Mammary epithelial cell (primary cell): ENCODE measurements at regions of chr20 and their contacts with region 1.

Region 1: GRCh38 chr20:32902456-32903420 is 44.0 kb downstream of the EFCAB8 start:
- DNase-seq: peak; percentile 36
- H3K4me3 ChIP-seq: no peak overlapping the region
- H3K27ac ChIP-seq: no peak overlapping the region
- H3K4me1 ChIP-seq: no peaks in the 10 kb centered on the region
- H3K27me3 ChIP-seq: no peaks in the 10 kb centered on the region
- CTCF ChIP-seq: peak; percentile 86 to 95

Region 2: DNA sequence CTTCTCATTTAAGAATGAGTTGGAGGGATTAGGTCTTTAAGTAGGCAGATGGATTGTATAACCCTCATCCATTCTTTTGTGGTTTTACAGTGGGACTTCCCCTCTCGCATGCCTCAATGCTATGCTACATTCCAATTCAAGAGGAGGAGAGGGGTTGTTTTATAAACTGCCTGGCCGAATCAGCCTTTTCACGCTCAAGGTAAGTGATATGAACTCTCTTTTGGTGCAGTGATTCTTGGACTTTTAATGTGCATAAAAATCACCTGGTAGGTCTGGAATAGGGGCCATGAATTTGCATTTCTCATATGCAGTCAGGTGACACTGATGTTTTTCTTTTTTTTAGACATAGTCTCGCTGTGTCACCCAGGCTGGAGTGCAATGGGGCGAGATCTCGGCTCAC is 533.8 kb before region 1 on chr20:
- CTCF ChIA-PET with region 1: interaction called, 46 read pairs
- dilution Hi-C with region 1: no loop called
- in situ Hi-C with region 1: no loop called
- intact Hi-C with region 1: no loop called
- DNase-seq: no peak
- H3K4me3 ChIP-seq: no peak overlapping the region
- H3K27ac ChIP-seq: no peak overlapping the region
- H3K4me1 ChIP-seq: peaks cover 14% of the 10 kb centered on the region
- H3K27me3 ChIP-seq: no peaks in the 10 kb centered on the region
- CTCF ChIP-seq: no peak

Region 3: GRCh38 chr20:32918296-32918695 is 15.6 kb after region 1 on chr20:
- CTCF ChIA-PET with region 1: no interaction called
- dilution Hi-C with region 1: no loop called
- in situ Hi-C with region 1: no loop called
- intact Hi-C with region 1: no loop called
- DNase-seq: no peak
- H3K4me3 ChIP-seq: no peak overlapping the region
- H3K27ac ChIP-seq: no peak overlapping the region
- H3K4me1 ChIP-seq: no peaks in the 10 kb centered on the region
- H3K27me3 ChIP-seq: no peaks in the 10 kb centered on the region
- CTCF ChIP-seq: no peak

Region 4: DNA sequence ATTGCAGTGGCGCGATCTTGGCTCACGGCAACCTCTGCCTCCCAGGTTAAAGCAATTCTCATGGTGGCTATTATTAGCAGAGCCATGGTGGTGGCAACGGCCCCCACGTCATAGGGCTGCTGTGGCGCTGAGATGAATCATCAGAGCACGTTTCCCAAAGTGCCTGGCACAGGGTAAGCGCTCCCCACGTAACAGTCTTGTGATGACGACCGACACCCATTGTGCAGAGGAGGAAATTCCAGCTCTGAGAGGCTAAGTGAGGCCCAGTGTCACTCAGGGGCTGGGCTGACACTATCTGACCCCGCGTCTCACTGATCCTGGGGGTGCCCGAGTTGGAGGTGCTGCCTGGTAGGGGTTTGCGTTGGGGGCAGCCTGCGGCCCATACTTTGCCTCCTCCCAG is 85.3 kb after region 1 on chr20:
- CTCF ChIA-PET with region 1: no interaction called
- dilution Hi-C with region 1: loop called (anchors 5 kb)
- in situ Hi-C with region 1: no loop called
- intact Hi-C with region 1: no loop called
- DNase-seq: no peak
- H3K4me3 ChIP-seq: no peak overlapping the region
- H3K27ac ChIP-seq: no peak overlapping the region
- H3K4me1 ChIP-seq: no peaks in the 10 kb centered on the region
- H3K27me3 ChIP-seq: no peaks in the 10 kb centered on the region
- CTCF ChIP-seq: no peak

Region 5: DNA sequence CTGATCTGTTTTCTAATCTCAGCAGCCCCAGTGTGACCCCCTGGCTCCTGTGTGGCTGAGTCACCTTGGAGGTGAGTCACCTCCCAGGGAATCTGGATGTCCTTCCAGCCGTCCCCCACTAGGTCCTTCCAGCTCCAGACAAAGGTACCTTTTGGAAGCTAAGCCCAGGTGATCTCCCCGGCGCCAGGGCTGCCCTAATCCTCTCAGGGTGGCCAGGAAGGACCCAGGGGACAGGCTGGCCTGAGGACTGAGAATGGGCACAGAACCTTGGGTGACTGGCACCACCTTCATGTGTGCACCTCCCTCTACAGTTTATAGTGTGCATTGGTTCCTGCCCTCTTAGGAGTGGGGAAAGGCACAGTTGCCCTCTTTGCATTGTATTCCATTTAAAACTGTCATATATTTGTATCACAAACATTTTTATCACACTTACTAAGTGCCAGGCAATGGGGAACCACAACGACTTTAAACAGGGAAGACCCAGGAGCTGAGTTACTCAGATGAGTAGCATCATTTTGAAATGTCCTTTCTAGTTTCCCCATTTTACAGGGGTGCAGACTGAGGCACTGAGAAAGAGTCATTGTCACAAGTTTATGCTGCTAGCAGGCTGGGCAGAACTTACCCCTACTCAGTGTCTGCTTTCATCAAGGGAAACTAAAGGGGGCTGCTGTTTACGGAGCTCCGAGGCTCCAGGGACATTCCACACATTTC is 174.1 kb after region 1 on chr20:
- CTCF ChIA-PET with region 1: no interaction called
- dilution Hi-C with region 1: no loop called
- in situ Hi-C with region 1: loop called in 1 of 2 experiments (anchors 25 kb)
- intact Hi-C with region 1: loop called (anchors 5 kb)
- DNase-seq: peak; percentile 17
- H3K4me3 ChIP-seq: no peak overlapping the region
- H3K27ac ChIP-seq: no peak overlapping the region
- H3K4me1 ChIP-seq: no peaks in the 10 kb centered on the region
- H3K27me3 ChIP-seq: no peaks in the 10 kb centered on the region
- CTCF ChIP-seq: peak; percentile 23 to 46

Region 6: GRCh38 chr20:33211817-33212424 is 309.2 kb after region 1 on chr20:
- CTCF ChIA-PET with region 1: no interaction called
- dilution Hi-C with region 1: no loop called
- in situ Hi-C with region 1: no loop called
- intact Hi-C with region 1: loop called (anchors 1 kb)
- DNase-seq: peak; percentile 44
- H3K4me3 ChIP-seq: no peak overlapping the region
- H3K27ac ChIP-seq: no peak overlapping the region
- H3K4me1 ChIP-seq: no peaks in the 10 kb centered on the region
- H3K27me3 ChIP-seq: no peaks in the 10 kb centered on the region
- CTCF ChIP-seq: peak; percentile 45 to 62

Region 7: GRCh38 chr20:33299111-33299603 is 396.4 kb after region 1 on chr20:
- CTCF ChIA-PET with region 1: no interaction called
- dilution Hi-C with region 1: no loop called
- in situ Hi-C with region 1: no loop called
- intact Hi-C with region 1: loop called (anchors 1 kb)
- DNase-seq: peak; percentile 35
- H3K4me3 ChIP-seq: peak overlapping the region in 1 of 3 experiments; percentile 20
- H3K27ac ChIP-seq: no peak overlapping the region
- H3K4me1 ChIP-seq: no peaks in the 10 kb centered on the region
- H3K27me3 ChIP-seq: no peaks in the 10 kb centered on the region
- CTCF ChIP-seq: peak; percentile 92 to 96

Region 8: GRCh38 chr20:33391722-33392415 is 489.1 kb after region 1 on chr20:
- CTCF ChIA-PET with region 1: no interaction called
- dilution Hi-C with region 1: no loop called
- in situ Hi-C with region 1: no loop called
- intact Hi-C with region 1: no loop called
- DNase-seq: no peak
- H3K4me3 ChIP-seq: no peak overlapping the region
- H3K27ac ChIP-seq: no peak overlapping the region
- H3K4me1 ChIP-seq: peaks cover 7% of the 10 kb centered on the region
- H3K27me3 ChIP-seq: no peaks in the 10 kb centered on the region
- CTCF ChIP-seq: no peak